ENCODE measurements at regions of chr15 and their contacts with region 1.

Region 1: GRCh38 chr15:43510200-43511011 is 7.0 kb upstream of the MAP1A start:
- DNase-seq: peak; percentile 98
- H3K4me3 Mint-ChIP-seq: peak overlapping the region; percentile 87
- H3K27ac Mint-ChIP-seq: peak overlapping the region; percentile 92
- H3K4me1 Mint-ChIP-seq: peaks cover 56% of the 10 kb centered on the region
- H3K27me3 Mint-ChIP-seq: peaks cover 6% of the 10 kb centered on the region

Region 2: GRCh38 chr15:43329960-43330779 is 180.2 kb before region 1 on chr15 and contains the start of gene LCMT2:
- intact Hi-C with region 1: loop called (anchors 1 kb)
- DNase-seq: peak; percentile 86
- H3K4me3 Mint-ChIP-seq: peak within 1 kb of the TSS; percentile 87
- H3K27ac Mint-ChIP-seq: peak within 1 kb of the TSS; percentile 94
- H3K4me1 Mint-ChIP-seq: peaks cover 40% of the 10 kb centered on the region
- H3K27me3 Mint-ChIP-seq: no peaks in the 10 kb centered on the region
- total RNA-seq, gene LCMT2: 15.4 and 15.7 TPM in 2 replicates

Region 3: DNA sequence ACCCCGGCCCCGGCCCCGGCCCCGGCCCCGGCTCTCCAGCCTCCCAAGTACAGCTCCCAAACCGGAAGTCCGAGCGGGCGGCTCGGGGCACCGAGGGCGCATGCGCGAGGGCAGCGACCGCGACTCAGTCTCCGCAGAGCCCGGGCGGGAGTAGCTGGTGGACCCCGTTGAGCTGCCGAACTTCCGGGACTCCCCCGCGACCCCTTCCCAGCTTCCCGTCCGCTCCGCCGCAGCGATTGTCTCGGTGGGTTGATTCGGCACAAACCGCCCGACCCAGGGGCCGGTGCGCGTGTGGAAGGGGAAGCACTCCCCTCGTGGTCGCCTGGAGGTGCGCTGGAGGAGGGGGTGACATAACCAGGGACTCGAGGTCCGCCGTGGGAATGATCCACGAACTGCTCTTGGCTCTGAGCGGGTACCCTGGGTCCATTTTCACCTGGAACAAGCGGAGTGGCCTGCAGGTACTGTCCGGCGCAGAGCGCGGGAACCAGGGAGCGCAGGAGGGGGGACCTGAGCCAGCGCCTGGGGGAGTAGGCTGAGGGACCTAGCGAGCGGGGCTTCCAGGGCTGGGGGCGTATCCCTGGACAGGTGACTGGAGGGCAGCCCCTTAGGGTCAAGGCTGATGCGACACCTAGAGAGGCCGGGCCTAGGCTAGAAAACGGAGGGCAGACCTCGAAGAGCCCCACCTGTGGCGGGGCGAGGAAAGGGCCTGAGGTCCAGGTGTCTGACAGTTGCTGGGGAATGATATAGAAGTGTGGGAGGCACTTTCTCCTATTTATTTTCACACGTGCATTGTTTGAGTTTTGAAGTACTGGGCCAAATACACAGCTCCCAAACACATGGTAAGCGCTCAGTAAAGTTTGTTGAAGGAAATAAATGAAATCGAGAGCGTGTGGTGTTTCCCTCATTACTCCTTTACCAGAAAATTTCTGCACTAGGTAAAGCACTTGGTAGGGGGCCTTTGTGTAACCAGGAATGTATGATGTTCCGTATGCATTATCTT is 139.1 kb before region 1 on chr15 and contains the starts of genes TUBGCP4 and ZSCAN29:
- intact Hi-C with region 1: loop called (anchors 1 kb)
- DNase-seq: peak; percentile 77
- H3K4me3 Mint-ChIP-seq: peak within 1 kb of the TSS; percentile 92
- H3K27ac Mint-ChIP-seq: peak within 1 kb of the TSS; percentile 83
- H3K4me1 Mint-ChIP-seq: peaks cover 54% of the 10 kb centered on the region
- H3K27me3 Mint-ChIP-seq: no peaks in the 10 kb centered on the region
- total RNA-seq, gene TUBGCP4: 46.5 and 47.2 TPM in 2 replicates
- total RNA-seq, gene ZSCAN29: 32.9 and 34.9 TPM in 2 replicates

Region 4: DNA sequence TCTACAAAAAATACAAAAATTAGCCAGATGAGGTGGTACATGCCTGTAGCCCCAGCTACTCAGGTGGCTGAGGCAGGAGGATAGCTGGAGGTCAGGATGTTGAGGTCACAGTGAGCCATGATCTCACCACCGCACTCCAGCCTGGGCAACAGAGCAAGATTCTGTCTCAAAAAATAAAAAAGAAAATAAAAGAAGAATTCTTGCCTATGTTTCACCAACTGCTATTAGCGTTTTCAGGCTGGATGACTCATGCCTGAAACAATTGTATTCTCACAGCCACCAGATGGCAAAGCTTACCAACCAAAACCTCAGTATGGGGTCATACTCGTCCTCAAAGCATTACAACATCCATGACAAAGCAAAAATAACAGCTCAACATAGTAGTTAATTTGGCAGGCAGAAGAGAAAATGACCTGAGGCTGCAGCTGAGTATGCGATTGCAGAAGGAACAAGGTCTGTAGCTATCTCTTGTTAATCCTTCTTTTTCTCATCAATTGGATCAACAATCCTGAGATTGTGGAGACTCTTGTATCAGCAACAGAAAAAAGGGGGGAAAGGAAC is 69.6 kb before region 1 on chr15:
- intact Hi-C with region 1: loop called (anchors 1 kb)
- DNase-seq: peak; percentile 21
- H3K4me3 Mint-ChIP-seq: peak overlapping the region; percentile 19
- H3K27ac Mint-ChIP-seq: peak overlapping the region; percentile 92
- H3K4me1 Mint-ChIP-seq: peaks cover 10% of the 10 kb centered on the region
- H3K27me3 Mint-ChIP-seq: no peaks in the 10 kb centered on the region

Region 5: GRCh38 chr15:43492673-43493601 is 17.5 kb before region 1 on chr15 and contains the start of gene TP53BP1:
- intact Hi-C with region 1: loop called (anchors 1 kb)
- DNase-seq: peak; percentile 93
- H3K4me3 Mint-ChIP-seq: peak within 1 kb of the TSS; percentile 93
- H3K27ac Mint-ChIP-seq: peak within 1 kb of the TSS; percentile 97
- H3K4me1 Mint-ChIP-seq: peaks cover 26% of the 10 kb centered on the region
- H3K27me3 Mint-ChIP-seq: no peaks in the 10 kb centered on the region
- total RNA-seq, gene TP53BP1: 44.1 and 46.1 TPM in 2 replicates

Region 6: GRCh38 chr15:43534897-43535296 is 24.5 kb after region 1 on chr15:
- intact Hi-C with region 1: no loop called
- DNase-seq: no peak
- H3K4me3 Mint-ChIP-seq: no peak overlapping the region
- H3K27ac Mint-ChIP-seq: no peak overlapping the region
- H3K4me1 Mint-ChIP-seq: no peaks in the 10 kb centered on the region
- H3K27me3 Mint-ChIP-seq: no peaks in the 10 kb centered on the region